GM12878 (cell line): ENCODE measurements at regions of chr4 and their contacts with region 1.

Region 1: DNA sequence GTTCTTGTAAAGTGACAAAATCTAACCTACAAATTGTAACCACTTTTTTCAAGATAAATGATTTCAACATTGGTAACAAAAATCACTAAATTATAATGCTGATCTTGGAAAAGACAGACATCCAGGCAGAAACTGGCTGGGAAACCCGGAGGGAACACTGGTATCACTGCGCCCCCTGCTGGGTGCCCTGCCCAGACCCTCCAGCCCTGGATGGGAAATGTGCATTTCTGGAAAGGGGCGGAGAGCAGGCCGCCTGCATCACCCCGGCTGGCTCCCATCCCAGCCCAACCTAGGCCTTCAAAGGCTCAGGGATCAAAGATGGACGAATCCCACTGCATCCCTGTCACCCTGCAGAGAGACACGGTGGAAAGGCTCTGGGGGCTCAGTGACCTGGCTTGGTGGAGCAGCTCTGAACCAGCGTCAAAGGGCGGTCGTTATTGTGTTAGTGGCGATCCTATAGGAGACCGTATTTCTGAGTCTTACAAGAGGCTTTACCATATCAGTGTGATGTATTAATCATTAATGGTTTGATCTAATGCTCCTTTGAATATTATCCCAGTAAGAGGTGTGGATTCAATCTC is 37.3 kb downstream of the ACOX3 start:
- DNase-seq: no peak
- ATAC-seq: peak; percentile 91
- H3K4me3 ChIP-seq: no peak overlapping the region
- H3K27ac ChIP-seq: no peak overlapping the region
- H3K4me1 ChIP-seq: no peaks in the 10 kb centered on the region
- H3K27me3 ChIP-seq: no peaks in the 10 kb centered on the region
- CTCF ChIP-seq: peak; percentile 81 to 91 (median 83)
- EP300 ChIP-seq: no peak
- POLR2A ChIP-seq: no peak
- RAD21 ChIP-seq: peak; percentile 66

Region 2: DNA sequence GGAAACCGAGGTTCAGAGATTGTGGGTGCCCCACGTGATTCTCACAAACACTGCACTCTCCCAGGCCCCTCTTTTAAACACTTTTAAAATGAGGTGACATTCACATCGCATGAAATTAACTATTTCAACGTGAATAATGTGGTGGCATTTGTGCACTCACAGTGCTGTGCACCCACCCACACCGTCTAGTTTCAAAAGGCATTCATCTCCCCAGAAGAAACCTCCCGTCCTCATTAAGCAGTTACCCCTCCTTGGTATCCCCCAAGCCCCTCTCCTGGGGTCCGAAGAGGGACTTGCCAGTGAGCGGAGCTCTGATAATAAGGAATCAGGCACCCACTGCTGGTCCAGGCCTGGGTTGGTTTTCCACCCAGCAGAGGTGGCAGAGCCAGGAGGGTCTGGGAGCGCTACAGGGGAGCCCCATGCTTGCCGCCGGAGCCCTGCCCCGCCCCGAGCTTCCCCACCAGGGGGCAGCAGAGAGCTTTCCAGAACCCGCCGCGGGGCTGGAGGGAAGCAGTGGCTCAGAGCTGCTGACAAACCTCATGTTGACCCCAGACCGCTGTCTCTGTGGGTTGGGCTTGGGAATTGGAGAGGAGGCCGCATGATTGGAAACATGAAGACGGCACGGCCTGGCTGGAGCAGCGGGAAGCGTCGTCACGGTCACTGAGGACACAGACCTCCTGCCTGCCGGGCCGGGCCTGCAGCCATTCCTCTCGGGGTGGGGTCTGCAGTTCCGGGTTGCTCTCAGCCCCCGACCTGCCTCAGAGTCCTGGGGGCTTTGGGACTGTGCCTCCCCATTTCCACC is 161.2 kb before region 1 on chr4:
- CTCF ChIA-PET with region 1: interaction called, 21 read pairs
- POLR2A ChIA-PET with region 1: no interaction called
- RAD21 ChIA-PET with region 1: interaction called, 9 read pairs
- SMC1A ChIA-PET with region 1: interaction called, 7 read pairs
- in situ Hi-C with region 1: loop called (anchors 5 kb)
- intact Hi-C with region 1: loop called (anchors 1 kb)
- DNase-seq: no peak
- ATAC-seq: peak; percentile 85
- H3K4me3 ChIP-seq: no peak overlapping the region
- H3K27ac ChIP-seq: no peak overlapping the region
- H3K4me1 ChIP-seq: peaks cover 3% of the 10 kb centered on the region
- H3K27me3 ChIP-seq: no peaks in the 10 kb centered on the region
- CTCF ChIP-seq: peak; percentile 91 to 96 (median 92)
- EP300 ChIP-seq: no peak
- POLR2A ChIP-seq: 0 out of 2 replicates have a peak, but pooled peaks have one; percentile 20
- RAD21 ChIP-seq: peak; percentile 77

Region 3: GRCh38 chr4:8267077-8267476 is 136.2 kb before region 1 on chr4:
- CTCF ChIA-PET with region 1: interaction called, 24 read pairs
- POLR2A ChIA-PET with region 1: no interaction called
- RAD21 ChIA-PET with region 1: interaction called, 3 read pairs
- SMC1A ChIA-PET with region 1: interaction called, 6 read pairs
- in situ Hi-C with region 1: no loop called
- intact Hi-C with region 1: loop called (anchors 1 kb)
- DNase-seq: no peak
- ATAC-seq: peak; percentile 92
- H3K4me3 ChIP-seq: no peak overlapping the region
- H3K27ac ChIP-seq: no peak overlapping the region
- H3K4me1 ChIP-seq: no peaks in the 10 kb centered on the region
- H3K27me3 ChIP-seq: peaks cover 2 to 6% of the 10 kb centered on the region in 2 experiments; a peak in 3 of 4 replicates
- CTCF ChIP-seq: peak; percentile 53 to 74 (median 67)
- EP300 ChIP-seq: no peak
- POLR2A ChIP-seq: no peak
- RAD21 ChIP-seq: peak; percentile 49

Region 4: DNA sequence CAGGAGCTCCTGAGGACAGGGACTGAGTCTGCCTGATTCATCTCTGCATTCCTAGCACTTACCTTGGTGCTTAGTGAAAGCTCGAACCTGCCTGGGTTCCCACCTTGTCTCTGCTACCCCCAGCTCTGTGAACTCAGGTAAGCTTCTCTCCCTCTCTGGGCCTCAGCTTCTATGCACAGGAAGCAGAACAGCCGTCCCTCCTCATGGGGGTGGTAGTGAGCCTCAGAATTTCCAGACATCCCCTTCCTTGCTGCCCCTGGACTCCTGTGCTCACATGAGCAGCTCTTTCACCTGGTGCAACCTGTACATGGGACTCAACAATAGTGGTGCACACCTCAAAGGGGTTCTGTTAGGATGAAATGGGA is 82.9 kb before region 1 on chr4:
- CTCF ChIA-PET with region 1: interaction called, 8 read pairs
- POLR2A ChIA-PET with region 1: no interaction called
- RAD21 ChIA-PET with region 1: interaction called, 3 read pairs
- SMC1A ChIA-PET with region 1: no interaction called
- in situ Hi-C with region 1: no loop called
- intact Hi-C with region 1: loop called (anchors 10 kb)
- DNase-seq: no peak
- ATAC-seq: peak; percentile 30; the same call in 1 of the 3 replicates
- H3K4me3 ChIP-seq: no peak overlapping the region
- H3K27ac ChIP-seq: no peak overlapping the region
- H3K4me1 ChIP-seq: no peaks in the 10 kb centered on the region
- H3K27me3 ChIP-seq: no peaks in the 10 kb centered on the region; a peak in 2 of 4 replicates
- CTCF ChIP-seq: peak; percentile 13 to 33 (median 15); a peak in 2 of 6 replicates
- EP300 ChIP-seq: no peak
- POLR2A ChIP-seq: no peak
- RAD21 ChIP-seq: peak; percentile 16; the same call in 1 of the 2 replicates

Region 5: GRCh38 chr4:8391972-8392371 is 11.3 kb before region 1 on chr4:
- CTCF ChIA-PET with region 1: interaction called, 15 read pairs
- POLR2A ChIA-PET with region 1: no interaction called
- RAD21 ChIA-PET with region 1: interaction called, 3 read pairs
- SMC1A ChIA-PET with region 1: interaction called, 3 read pairs
- in situ Hi-C with region 1: no loop called
- intact Hi-C with region 1: no loop called
- DNase-seq: peak; percentile 60
- ATAC-seq: peak; percentile 87
- H3K4me3 ChIP-seq: no peak overlapping the region
- H3K27ac ChIP-seq: peak overlapping the region; percentile 26; the same call in 1 of the 2 replicates
- H3K4me1 ChIP-seq: peaks cover 14% of the 10 kb centered on the region
- H3K27me3 ChIP-seq: no peaks in the 10 kb centered on the region
- CTCF ChIP-seq: no peak
- EP300 ChIP-seq: peak; percentile 54 to 77; a peak in 2 of 4 replicates
- POLR2A ChIP-seq: no peak
- RAD21 ChIP-seq: no peak

Region 6: DNA sequence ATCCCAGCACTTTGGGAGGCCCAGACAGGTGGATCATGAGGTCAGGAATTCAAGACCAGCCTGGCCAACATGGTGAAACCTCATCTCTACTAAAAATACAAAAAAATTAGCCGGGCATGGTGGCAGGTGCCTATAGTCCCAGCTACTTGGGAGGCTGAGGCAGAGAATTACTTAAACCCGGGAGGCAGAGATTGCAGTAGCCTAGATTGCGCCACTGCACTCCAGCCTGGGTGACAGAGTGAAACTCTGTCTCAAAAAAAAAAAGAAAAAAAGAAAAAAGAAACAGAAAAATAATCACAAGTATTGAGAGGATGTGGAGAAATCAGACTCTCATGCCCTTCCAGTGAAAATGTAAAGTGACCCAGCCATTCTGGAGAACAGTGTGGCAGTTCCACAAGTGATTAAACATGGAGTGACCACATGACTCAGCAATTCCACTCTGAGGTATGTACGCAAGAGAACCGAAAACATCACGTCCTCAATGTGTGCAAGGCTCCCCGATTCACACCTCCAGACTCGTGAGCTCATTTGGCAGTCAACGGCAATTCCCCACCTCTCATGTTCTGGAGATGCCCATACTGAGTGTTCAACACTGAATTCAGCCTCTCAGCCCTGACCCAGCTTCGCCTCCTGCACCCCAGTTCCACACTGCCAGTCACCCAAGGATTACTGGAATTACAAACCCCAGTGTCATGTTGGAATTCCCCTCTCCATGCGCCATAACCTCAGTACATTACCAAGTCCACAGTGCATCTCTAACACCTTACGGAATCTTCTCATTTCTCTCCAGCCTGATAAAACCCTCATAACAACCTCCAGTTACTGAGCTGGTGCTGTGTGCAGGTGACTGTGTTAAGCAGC is 16.1 kb after region 1 on chr4:
- CTCF ChIA-PET with region 1: interaction called, 13 read pairs
- POLR2A ChIA-PET with region 1: no interaction called
- RAD21 ChIA-PET with region 1: no interaction called
- SMC1A ChIA-PET with region 1: interaction called, 7 read pairs
- in situ Hi-C with region 1: no loop called
- intact Hi-C with region 1: no loop called
- DNase-seq: peak; percentile 37
- ATAC-seq: peak; percentile 97
- H3K4me3 ChIP-seq: no peak overlapping the region
- H3K27ac ChIP-seq: peak overlapping the region; percentile 32
- H3K4me1 ChIP-seq: peaks cover 14% of the 10 kb centered on the region
- H3K27me3 ChIP-seq: no peaks in the 10 kb centered on the region
- CTCF ChIP-seq: no peak
- EP300 ChIP-seq: peak; percentile 66 to 75; a peak in 3 of 4 replicates
- POLR2A ChIP-seq: no peak
- RAD21 ChIP-seq: no peak

Region 7: GRCh38 chr4:8441499-8442080 is 38.3 kb after region 1 on chr4:
- CTCF ChIA-PET with region 1: no interaction called
- POLR2A ChIA-PET with region 1: no interaction called
- RAD21 ChIA-PET with region 1: no interaction called
- SMC1A ChIA-PET with region 1: no interaction called
- in situ Hi-C with region 1: no loop called
- intact Hi-C with region 1: no loop called
- DNase-seq: no peak
- ATAC-seq: no peak
- H3K4me3 ChIP-seq: peak overlapping the region; percentile 87
- H3K27ac ChIP-seq: peak overlapping the region; percentile 76
- H3K4me1 ChIP-seq: peaks cover 12% of the 10 kb centered on the region
- H3K27me3 ChIP-seq: no peaks in the 10 kb centered on the region
- CTCF ChIP-seq: no peak
- EP300 ChIP-seq: no peak
- POLR2A ChIP-seq: no peak
- RAD21 ChIP-seq: no peak